ENCODE measurements at regions of chr11 and their contacts with region 1.

Region 1: DNA sequence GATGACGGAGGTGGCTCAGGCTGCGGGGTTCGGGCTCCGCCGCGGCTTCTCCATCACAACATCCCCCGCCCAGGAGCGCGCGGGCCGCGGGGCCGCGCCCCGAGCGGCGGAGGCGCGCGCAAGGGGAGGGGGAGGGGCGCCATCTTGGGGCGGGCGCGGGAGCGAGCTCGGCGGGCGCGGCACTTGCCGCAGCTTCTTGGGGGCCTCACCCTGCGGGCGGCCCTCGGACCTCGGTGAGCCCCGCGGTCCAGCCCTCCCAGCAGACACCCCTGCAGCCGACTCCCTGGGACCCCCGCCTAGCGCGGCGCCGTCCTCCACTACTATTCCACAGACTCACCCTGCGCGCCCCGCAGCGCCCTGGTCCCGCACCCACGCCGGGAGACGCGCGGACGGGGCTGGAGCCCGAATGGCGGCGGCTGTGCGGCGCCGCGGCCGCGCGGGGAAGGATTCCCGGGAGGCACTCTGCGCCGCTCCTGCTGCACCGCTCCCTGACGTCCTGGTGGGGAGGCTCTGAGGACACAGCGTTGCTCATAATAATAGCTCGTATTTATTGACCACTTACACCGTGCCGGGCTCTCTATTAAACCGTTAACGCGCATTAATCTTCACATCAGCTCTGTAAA is at the start of gene APBB1:
- DNase-seq: peak; percentile 86

Region 2: DNA sequence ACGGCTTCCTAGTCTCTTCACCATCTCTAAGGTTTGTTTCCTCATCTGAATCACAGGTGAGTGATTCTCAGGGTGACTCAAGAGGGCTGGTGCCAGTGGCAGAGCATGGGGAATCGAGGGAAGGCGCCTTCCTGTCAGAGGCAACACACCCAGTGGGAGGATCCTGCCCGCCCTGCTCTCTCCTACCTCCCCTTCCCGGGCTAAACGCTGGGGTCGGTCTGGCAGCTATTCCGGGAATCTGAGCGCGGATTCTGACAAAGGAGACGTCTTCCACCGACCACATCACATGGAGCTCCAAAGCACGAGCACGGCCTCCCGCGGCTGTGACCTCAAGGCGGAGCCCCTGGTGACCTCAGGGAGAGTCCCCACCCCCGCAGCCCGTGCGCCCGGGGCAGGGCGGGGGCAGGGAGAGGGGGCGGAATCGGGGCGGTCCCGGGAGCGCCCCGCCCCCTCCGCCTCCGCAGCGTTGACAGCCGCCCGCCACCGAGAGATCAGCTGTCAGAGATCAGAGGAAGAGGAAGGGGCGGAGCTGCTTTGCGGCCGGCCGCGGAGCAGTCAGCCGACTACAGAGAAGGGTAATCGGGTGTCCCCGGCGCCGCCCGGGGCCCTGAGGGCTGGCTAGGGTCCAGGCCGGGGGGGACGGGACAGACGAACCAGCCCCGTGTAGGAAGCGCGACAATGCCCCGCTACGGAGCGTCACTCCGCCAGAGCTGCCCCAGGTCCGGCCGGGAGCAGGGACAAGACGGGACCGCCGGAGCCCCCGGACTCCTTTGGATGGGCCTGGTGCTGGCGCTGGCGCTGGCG is 29.0 kb before region 1 on chr11 and contains the start of gene SMPD1:
- CTCF ChIA-PET with region 1: no interaction called
- POLR2A ChIA-PET with region 1: interaction called, 28 read pairs
- DNase-seq: peak; percentile 91

Region 3: GRCh38 chr11:6402561-6402981 is 16.5 kb before region 1 on chr11:
- CTCF ChIA-PET with region 1: no interaction called
- POLR2A ChIA-PET with region 1: interaction called, 19 read pairs
- DNase-seq: no peak

Region 4: DNA sequence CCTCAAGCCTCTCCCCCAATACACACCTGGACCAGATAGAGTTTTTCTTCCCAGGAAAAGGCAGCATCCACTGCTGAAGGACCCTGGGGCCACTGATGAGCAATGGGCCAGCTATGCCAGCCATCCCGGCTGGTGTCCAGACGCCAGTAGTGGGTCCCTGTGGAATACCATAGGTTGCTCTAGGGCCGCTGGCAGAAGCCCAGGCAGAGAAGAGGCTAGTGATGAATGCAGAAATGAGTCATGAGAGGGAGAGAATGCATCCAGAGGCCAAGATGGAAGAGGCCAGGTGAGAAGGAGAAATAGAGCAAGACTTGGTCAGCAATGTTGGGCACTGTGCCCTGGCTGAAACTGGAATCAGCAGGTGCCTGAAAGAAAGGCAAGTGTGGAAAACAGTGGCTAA is 12.7 kb after region 1 on chr11:
- CTCF ChIA-PET with region 1: no interaction called
- POLR2A ChIA-PET with region 1: interaction called, 17 read pairs
- DNase-seq: no peak

Region 5: DNA sequence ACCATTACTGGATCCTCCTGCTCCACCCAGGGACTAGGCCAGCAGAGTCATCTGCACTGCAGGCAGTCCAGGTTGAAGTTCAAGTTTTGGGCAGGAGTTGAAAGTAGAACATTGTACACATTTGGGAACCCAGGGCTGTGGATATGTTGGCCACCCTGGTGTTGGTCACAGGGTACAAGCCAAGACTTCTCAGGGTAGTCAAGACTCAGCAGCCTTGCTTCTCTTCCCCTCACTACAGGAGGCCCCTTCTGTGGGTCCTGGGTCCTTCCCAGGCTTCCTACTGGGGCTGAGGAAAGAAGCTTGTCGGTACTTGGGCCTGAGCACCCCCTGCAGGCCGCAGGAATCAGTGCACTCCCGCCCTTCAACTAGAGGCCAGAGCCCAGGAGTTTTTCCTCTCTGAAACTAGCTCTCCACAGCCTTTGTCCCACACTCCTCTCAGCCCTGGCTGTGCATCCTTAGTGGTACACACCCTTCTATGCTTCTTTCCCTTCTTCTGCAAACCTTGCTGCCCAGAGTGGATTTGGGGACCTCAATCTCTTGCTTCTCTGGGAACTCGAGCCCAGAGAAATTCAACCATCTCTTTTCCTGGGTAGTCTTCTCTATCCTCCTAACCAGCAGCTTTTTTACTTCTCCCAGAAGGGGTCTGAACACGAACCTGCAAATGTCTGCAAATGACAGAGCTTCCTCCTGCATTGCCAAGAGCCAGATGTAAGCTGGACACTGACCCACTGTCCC is 24.3 kb after region 1 on chr11:
- CTCF ChIA-PET with region 1: interaction called, 6 read pairs
- POLR2A ChIA-PET with region 1: interaction called, 13 read pairs
- DNase-seq: peak; percentile 74

Region 6: GRCh38 chr11:6468712-6469495 is 49.8 kb after region 1 on chr11:
- CTCF ChIA-PET with region 1: interaction called, 3 read pairs
- POLR2A ChIA-PET with region 1: interaction called, 14 read pairs
- DNase-seq: peak; percentile 87

Region 7: DNA sequence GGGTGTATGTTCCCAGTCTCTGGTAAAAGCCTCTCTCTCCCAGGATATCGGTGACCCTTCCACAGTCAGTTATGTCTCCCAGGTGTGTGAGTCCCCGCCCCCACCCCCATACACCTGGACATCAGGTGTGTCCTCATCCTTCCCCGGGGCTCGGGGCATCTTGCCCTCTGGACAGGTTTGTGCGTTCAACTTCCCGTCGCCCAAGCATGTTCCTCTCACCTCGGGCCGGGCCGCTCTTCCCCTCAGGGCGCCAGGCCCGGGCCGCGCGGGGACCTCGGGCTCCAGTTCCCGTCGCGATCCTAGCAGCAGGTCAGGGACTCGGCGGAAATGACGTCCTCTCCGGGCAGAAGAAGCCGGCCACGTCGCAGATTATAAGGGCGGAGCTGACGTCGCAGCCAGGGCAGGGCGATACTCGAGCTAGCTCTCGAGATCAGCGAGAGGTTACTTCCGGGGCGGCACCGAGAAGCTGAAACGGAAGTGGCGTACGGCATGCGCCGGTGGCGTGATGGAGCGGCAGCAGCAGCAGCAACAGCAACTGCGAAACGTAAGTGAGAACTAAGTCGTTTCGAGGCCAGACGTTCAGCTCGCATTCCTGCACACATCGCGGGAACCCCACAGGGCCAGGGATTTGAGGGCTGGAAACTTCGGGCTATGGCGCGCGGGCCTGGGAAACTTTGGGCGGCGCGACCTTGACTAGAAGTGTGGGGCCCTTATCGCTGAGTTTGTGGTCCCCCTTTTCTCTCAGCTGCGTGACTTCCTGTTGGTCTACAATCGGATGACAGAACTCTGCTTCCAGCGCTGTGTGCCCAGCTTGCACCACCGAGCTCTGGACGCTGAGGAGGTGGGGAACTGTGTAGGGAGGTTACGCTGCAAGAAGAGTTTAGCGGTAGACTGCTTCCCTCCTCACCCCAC is 62.1 kb after region 1 on chr11 and contains the starts of genes ARFIP2 and TIMM10B:
- CTCF ChIA-PET with region 1: no interaction called
- POLR2A ChIA-PET with region 1: interaction called, 11 read pairs
- DNase-seq: peak; percentile 97

Region 8: DNA sequence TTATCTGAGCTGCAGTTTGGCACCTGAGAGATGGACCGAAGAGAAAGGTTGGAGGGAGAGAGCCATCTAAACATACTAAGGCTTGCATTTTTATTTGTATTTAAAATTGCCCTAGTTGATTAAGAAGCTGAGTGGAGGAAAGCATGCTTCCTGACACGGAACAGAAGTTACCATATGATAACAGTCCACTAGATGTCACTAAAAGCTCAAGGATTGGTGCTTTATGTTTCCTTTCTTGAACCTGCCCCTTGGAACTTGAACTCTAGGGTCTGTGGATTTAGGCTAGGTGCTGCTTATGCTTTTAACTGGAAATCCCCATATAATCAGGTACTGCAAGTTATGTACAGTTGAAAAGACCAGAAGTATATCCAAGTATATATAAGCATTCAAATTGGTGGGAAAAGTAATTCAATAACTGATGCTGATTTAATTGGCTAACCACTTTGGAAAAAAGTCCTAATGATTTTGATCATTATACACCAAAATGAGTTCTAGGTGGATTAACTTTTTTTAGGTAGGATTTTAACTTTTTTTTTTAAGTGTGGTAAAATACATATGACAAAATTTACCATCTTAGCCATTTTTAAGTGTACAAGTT is 679.2 kb after region 1 on chr11:
- CTCF ChIA-PET with region 1: no interaction called
- POLR2A ChIA-PET with region 1: no interaction called
- DNase-seq: peak; percentile 62

Measured in HEK293T (cell line).